ENCODE measurements at regions of chr16 and their contacts with region 1.

Region 1: DNA sequence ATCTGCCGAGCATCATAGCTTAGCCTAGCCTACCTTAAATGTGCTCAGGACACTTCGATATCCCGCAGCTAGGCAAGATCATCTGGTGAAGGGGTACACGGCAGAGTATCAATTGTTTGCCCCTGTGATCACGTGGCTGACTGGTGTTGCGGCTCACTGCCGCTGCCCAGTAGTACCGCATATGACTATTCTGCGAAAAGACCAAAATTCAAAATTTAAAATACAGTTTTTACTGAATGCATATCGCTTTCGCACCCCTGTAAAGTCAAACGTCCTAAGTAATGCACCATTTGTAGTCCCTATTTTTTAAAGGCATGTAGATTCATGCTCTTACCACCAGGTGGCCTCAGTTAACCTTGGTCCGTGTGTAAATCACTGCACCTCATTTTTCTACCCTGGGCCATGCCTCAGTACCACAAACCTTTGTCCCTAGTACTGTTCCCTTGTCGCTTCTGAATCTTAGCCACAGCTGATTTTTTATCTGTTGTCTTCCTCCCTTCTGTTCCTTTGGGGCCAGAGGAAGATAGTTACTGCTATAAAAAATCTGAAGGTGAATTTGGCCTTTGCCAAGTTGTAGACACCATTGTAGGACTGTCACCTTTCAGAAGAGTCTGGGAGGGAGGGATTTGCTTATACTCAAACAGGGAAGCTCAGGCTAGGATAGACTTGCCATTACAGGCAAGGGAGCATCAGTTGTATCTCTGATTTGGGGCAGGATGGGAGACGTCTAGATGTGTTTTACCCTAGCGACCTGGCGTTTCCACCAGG is 34.4 kb downstream of the WWP2 start:
- DNase-seq: peak; percentile 8 to 43
- H3K4me3 ChIP-seq: no peak overlapping the region
- H3K27ac ChIP-seq: no peak overlapping the region
- H3K4me1 ChIP-seq: no peaks in the 10 kb centered on the region
- H3K27me3 ChIP-seq: no peaks in the 10 kb centered on the region
- CTCF ChIP-seq: peak; percentile 88

Region 2: GRCh38 chr16:69930117-69930776 is 133.7 kb after region 1 on chr16:
- CTCF ChIA-PET with region 1: interaction called, 10 read pairs
- POLR2A ChIA-PET with region 1: interaction called, 6 read pairs
- intact Hi-C with region 1: loop called (anchors 1 kb)
- DNase-seq: peak in 1 of 2 experiments; percentile 32
- H3K4me3 ChIP-seq: no peak overlapping the region
- H3K27ac ChIP-seq: no peak overlapping the region
- H3K4me1 ChIP-seq: no peaks in the 10 kb centered on the region
- H3K27me3 ChIP-seq: no peaks in the 10 kb centered on the region
- CTCF ChIP-seq: peak; percentile 90

Region 3: GRCh38 chr16:69935278-69935711 is 138.8 kb after region 1 on chr16:
- CTCF ChIA-PET with region 1: interaction called, 10 read pairs
- POLR2A ChIA-PET with region 1: interaction called, 6 read pairs
- intact Hi-C with region 1: loop called (anchors 1 kb)
- DNase-seq: no peak
- H3K4me3 ChIP-seq: no peak overlapping the region
- H3K27ac ChIP-seq: no peak overlapping the region
- H3K4me1 ChIP-seq: no peaks in the 10 kb centered on the region
- H3K27me3 ChIP-seq: no peaks in the 10 kb centered on the region
- CTCF ChIP-seq: no peak